Right ventricle myocardium inferior (tissue), 1 donor: ENCODE measurements at regions of chr4 and their contacts with region 1.

Region 1: GRCh38 chr4:10164877-10165283 is 48.3 kb upstream of the WDR1 start:
- DNase-seq: no peak
- ATAC-seq: no peak

Region 2: GRCh38 chr4:10223782-10224181 is 58.9 kb after region 1 on chr4:
- intact Hi-C with region 1: no loop called
- DNase-seq: no peak
- ATAC-seq: no peak

Region 3: DNA sequence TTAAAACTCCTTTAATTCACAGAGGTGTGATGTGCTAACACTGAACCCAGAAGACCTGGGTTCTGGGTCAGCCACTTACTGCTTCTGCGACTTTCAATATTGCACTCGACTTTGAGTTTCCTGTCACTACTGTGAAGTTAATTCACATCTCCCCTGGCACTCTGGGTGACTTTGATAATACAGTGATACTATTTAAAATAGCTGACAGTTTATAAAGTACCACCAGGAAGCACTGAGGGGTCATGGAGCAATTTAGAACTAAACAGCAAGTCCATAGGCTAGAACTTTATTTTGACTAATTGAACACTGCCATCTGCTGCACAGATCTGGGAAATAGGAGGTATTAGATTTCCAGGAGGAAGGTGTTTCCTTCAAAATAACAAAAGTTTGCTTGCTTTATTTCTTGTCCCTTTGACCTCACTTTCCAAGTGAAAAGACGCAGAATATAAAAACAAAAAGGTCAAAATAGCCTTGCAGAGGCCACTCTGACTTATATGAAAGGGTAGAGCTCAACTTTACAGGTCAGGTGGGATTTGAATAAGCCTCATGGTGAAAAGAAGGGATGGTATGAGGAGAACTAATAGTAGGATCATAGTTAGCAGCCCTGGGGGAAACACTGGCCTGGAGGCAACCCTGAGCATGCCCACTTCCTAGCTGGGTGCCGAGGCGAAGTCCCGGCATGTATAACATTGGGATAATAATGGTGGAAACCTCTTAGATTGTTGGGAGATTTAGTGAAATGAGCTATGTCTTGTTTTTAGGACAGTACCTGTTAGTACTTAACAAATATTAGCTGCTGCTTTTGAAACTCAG is 239.0 kb after region 1 on chr4:
- intact Hi-C with region 1: loop called (anchors 2 kb)
- DNase-seq: no peak
- ATAC-seq: no peak

Region 4: DNA sequence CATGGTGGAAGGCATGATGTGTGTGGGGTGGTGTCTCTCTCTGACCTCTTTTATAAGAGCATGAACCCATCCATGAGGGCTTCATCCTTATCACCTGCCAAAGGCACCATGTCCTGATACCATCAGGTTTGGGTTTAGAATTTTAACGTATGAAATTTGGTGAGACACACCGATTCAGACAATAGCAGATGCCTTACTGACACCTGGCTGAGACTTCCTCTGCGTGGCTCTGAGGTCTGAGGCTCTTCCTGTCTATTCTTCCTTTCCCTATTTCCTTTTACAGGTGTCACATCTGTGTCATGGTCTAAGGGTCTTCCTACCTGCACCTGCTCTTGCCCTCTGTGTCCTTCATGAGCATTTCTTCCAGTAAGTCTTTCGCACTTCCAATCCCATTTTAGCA is 840.4 kb after region 1 on chr4:
- intact Hi-C with region 1: no loop called
- DNase-seq: no peak
- ATAC-seq: no peak